SK-N-SH (cell line): ENCODE measurements at regions of chr7 and their contacts with region 1.

Region 1: DNA sequence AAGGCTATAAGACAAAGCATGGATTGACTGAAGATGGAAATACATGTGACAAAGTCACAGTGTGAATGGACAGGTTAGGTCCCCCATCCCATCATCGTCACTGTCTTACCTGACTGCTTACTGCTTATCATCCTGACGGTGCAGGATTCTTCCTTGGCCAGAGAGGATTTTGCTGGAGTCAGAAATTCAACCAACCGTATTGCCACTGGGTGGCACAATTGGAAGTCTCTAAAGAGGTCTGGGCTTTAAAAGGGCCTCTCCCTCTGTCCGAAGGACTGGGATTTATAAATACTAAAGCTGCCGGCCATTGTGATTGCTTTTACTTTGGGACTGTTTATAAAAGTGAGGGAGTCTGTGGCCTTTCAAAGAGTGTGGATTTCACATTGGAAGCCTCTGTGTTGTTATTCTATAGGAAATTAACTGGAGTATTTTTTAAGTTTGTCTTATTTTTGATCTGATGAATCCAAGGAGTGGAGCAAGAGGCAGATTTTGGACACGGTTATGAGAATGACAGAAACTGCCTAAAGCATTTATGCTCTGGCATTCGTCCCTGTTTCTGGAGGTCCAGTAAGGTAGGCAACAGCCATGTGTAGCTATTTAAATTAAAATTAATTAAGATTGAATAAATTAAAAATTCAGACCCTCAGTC is 113.3 kb upstream of the CREB5 start:
- DNase-seq: peak; percentile 77
- H3K4me3 ChIP-seq: no peak overlapping the region
- H3K27ac ChIP-seq: no peak overlapping the region
- H3K4me1 ChIP-seq: no peaks in the 10 kb centered on the region; a peak in 2 of 4 replicates
- H3K27me3 ChIP-seq: no peaks in the 10 kb centered on the region; the same call in 1 of the 2 replicates
- CTCF ChIP-seq: peak; percentile 79
- EP300 ChIP-seq: no peak
- RAD21 ChIP-seq: peak; percentile 99

Region 2: DNA sequence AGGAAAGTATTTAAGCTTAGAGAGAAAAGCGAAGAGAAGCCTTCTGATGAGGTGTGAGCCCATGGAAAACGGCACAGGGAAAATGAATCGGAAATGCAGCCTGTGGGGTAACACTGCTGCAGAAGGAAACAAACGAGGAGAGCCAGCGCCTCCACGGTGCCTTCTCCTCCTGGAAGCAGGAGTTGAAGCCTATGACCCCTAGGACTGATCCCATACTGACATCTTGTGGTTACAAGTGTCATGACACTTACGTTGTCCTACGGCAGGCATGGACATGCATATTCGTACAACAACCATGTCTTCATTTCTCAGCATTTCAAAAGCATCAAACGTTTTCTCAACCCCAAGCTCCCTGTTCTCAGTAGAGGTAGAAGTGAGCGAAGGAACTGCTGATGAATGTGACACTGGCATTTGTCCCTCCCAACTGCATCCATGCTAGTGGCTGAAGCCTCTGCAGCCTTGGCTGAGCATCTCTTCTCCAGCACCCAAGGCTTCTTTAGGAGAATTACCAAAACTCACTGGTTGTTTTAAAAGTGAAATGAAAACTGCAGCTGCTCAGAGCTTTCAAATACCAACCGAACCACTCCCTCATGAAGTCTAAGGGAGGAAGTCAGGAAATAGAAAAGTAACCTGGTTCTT is 278.6 kb before region 1 on chr7:
- CTCF ChIA-PET with region 1: no interaction called
- POLR2A ChIA-PET with region 1: no interaction called
- DNase-seq: peak; percentile 84
- H3K4me3 ChIP-seq: no peak overlapping the region; a peak in 1 of 4 replicates
- H3K27ac ChIP-seq: no peak overlapping the region
- H3K4me1 ChIP-seq: peaks cover 7 to 14% of the 10 kb centered on the region in 2 experiments; a peak in 2 of 4 replicates
- H3K27me3 ChIP-seq: no peaks in the 10 kb centered on the region
- CTCF ChIP-seq: peak; percentile 97
- EP300 ChIP-seq: no peak
- RAD21 ChIP-seq: peak; percentile 99

Region 3: DNA sequence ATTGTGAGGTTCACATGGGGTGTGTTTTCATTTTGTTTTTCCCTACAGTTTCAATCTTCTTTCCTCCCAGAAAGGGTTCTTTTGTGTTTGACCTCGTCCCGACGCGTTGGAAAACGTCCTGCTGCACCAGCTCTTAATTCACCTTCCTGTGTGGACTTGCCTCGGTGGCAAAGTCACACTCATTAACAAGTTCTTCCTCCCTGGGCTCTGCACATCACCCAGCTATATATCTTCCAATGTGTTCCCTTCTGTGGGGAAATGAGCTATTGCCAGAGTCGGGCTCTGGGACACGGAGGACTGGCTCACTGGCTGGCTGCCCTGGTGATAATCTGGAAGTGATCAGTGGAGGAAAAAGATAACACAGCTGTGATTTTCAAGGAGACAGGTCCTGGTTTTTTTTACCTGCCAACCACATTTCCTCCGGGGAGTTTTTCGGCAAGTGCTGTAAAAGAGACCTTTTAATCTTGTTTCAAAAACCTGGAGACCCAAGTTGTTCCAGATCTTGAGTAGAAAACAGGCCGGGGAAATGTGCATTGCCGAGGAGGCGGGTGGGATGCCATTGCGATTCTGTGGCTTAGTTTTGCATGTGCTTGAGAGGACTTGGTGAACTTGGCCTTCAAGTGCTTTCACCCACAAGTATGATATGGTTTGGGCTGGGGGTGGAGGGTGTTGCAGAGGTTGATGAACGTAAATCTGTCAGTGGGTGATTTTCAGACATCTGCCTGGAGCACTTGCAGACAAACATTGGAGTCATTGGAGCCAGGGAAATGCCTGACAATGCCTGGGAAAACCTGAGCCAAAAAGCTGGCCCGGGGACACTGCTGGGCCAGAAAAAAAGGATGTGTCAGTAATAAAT is 16.8 kb after region 1 on chr7:
- CTCF ChIA-PET with region 1: interaction called, 41 read pairs
- POLR2A ChIA-PET with region 1: no interaction called
- DNase-seq: peak; percentile 80
- H3K4me3 ChIP-seq: no peak overlapping the region
- H3K27ac ChIP-seq: peak overlapping the region in 1 of 2 experiments; percentile 57; a peak in 2 of 4 replicates
- H3K4me1 ChIP-seq: peaks cover 0 to 29% of the 10 kb centered on the region in 2 experiments; a peak in 2 of 4 replicates
- H3K27me3 ChIP-seq: peaks cover 29% of the 10 kb centered on the region; the same call in 1 of the 2 replicates
- CTCF ChIP-seq: no peak
- EP300 ChIP-seq: peak; percentile 21 to 93; a peak in 3 of 4 replicates
- RAD21 ChIP-seq: no peak

Region 4: GRCh38 chr7:28354601-28355402 is 55.8 kb after region 1 on chr7:
- CTCF ChIA-PET with region 1: interaction called, 11 read pairs
- POLR2A ChIA-PET with region 1: no interaction called
- DNase-seq: no peak
- H3K4me3 ChIP-seq: no peak overlapping the region
- H3K27ac ChIP-seq: peak overlapping the region in 1 of 2 experiments; percentile 72; a peak in 2 of 4 replicates
- H3K4me1 ChIP-seq: peaks cover 16 to 34% of the 10 kb centered on the region in 2 experiments
- H3K27me3 ChIP-seq: no peaks in the 10 kb centered on the region
- CTCF ChIP-seq: no peak
- EP300 ChIP-seq: peak in 1 of 2 experiments; percentile 92; a peak in 2 of 4 replicates
- RAD21 ChIP-seq: no peak

Region 5: GRCh38 chr7:28389504-28390395 is 90.8 kb after region 1 on chr7:
- CTCF ChIA-PET with region 1: interaction called, 12 read pairs
- POLR2A ChIA-PET with region 1: no interaction called
- DNase-seq: peak; percentile 44
- H3K4me3 ChIP-seq: peak overlapping the region; percentile 32 to 45
- H3K27ac ChIP-seq: no peak overlapping the region
- H3K4me1 ChIP-seq: peaks cover 0 to 6% of the 10 kb centered on the region in 2 experiments; a peak in 1 of 4 replicates
- H3K27me3 ChIP-seq: no peaks in the 10 kb centered on the region; the same call in 1 of the 2 replicates
- CTCF ChIP-seq: peak; percentile 99
- EP300 ChIP-seq: no peak
- RAD21 ChIP-seq: peak; percentile 85

Region 6: DNA sequence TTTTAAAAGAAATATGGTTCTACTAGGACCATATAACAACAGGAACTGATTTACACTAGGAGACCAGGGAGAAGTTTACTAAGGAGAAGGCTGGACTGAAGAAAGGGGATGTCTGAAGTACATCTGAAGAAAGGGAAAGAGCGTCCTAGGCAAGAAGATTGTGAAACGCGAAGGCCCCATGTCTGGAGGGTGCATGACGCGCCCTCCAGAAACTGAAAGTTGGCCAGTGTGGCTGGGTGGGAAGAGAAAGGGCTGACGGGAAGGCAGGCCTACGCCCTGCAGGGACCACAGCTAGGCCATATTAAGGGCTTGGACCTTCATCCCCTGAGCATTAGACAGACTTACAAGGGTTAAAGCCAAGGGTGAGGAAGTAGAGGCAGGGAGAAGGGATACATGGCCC is 501.2 kb after region 1 on chr7:
- CTCF ChIA-PET with region 1: interaction called, 10 read pairs
- POLR2A ChIA-PET with region 1: no interaction called
- DNase-seq: no peak
- H3K4me3 ChIP-seq: no peak overlapping the region
- H3K27ac ChIP-seq: no peak overlapping the region
- H3K4me1 ChIP-seq: peaks cover 0 to 3% of the 10 kb centered on the region in 2 experiments; a peak in 1 of 4 replicates
- H3K27me3 ChIP-seq: no peaks in the 10 kb centered on the region
- CTCF ChIP-seq: no peak
- EP300 ChIP-seq: no peak
- RAD21 ChIP-seq: no peak